ENCODE measurements at regions of chr6 and their contacts with region 1.

Region 1: GRCh38 chr6:20291764-20292580 is 79.7 kb upstream of the MBOAT1 start:
- DNase-seq: peak in 8 of 10 donors; percentile 40 to 91 (median 74)

Region 2: DNA sequence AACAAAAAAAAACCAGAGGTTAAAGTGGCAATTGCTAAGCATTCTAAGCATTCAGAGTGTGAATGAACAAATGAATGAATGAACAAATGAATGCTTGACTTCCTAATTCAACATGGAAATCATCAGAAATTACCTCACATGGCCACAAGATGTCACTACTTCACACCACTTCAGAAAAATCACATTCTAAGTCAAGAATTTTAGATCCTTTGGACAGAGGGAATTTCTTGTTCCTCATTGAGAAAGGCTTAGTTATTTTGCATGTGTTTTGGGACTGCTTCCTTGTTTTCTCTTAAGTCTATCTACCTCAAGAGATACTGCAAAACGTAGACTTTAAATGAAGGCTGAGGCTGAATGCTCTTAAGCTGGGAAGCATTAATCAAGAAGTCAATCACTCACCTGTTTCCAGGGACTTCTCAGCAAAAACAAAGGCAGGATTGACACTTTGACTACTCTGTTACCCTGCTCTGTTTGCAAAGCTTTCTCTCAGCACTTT is 199.9 kb before region 1 on chr6:
- intact Hi-C with region 1: loop called (anchors 5 kb)
- DNase-seq: no peak

Region 3: DNA sequence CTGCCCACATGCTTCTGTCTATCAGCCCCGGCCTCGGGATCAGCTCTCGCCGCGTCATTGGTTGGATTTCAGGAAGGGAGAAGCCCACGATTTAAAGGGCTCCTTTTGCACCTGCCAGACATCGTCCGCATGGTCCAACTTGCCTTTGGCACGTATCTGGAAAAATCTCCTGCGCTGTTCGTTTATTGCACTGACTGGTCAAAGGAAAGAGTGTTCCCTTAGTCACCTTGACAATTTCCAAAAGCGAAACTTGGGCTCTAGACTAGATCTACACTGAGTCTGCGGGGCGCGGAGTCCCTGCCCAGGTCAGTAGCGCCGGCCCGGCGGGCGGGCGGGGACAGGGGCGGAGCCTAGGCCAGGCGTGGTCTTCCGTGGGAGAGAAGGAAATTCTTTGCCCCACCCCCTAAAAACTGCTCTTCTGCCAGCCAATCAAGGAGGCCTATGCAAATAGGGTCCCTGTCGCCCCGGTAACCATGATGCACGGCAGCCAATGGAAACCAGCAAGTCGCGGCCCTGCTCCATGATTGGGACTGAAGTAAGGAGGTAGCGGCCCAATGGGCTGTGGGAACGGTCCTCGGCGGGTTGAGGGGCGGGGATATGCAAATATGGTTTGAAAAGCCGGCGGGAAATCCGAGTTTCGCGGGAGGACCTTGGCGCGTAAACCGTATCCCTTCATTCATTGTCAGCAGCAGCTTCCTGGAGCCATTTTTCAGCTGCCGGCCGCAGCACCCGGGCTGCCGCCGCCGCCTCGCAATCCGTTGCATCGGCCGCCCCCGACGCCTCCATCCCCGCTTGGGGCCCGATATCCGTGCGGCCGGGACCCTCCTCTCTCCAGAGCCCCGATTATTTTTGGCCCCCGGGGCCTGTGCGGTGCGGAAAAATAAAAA is 109.5 kb after region 1 on chr6 and contains the start of gene E2F3:
- intact Hi-C with region 1: loop called (anchors 5 kb)
- DNase-seq: peak; percentile 95 to 100 (median 99)